ENCODE measurements at regions of chr17 and their contacts with region 1.

Region 1: GRCh38 chr17:48030531-48030930 is 7.1 kb downstream of the COPZ2 start:
- DNase-seq: no peak
- H3K4me3 ChIP-seq: no peak overlapping the region
- H3K4me3 Mint-ChIP-seq: no peak overlapping the region
- H3K27ac Mint-ChIP-seq: no peak overlapping the region
- H3K4me1 ChIP-seq: peaks cover 14% of the 10 kb centered on the region
- H3K4me1 Mint-ChIP-seq: peaks cover 21% of the 10 kb centered on the region
- H3K27me3 ChIP-seq: no peaks in the 10 kb centered on the region
- H3K27me3 Mint-ChIP-seq: no peaks in the 10 kb centered on the region
- CTCF ChIP-seq: no peak

Region 2: GRCh38 chr17:48484850-48485249 is 454.3 kb after region 1 on chr17:
- CTCF ChIA-PET with region 1: no interaction called
- POLR2A ChIA-PET with region 1: interaction called, 10 read pairs
- intact Hi-C with region 1: no loop called
- DNase-seq: no peak
- H3K4me3 ChIP-seq: no peak overlapping the region
- H3K4me3 Mint-ChIP-seq: no peak overlapping the region
- H3K27ac Mint-ChIP-seq: no peak overlapping the region
- H3K4me1 ChIP-seq: no peaks in the 10 kb centered on the region
- H3K4me1 Mint-ChIP-seq: no peaks in the 10 kb centered on the region
- H3K27me3 ChIP-seq: no peaks in the 10 kb centered on the region
- H3K27me3 Mint-ChIP-seq: peaks cover 30% of the 10 kb centered on the region
- CTCF ChIP-seq: no peak

Measured in Caco-2 (cell line).